Activated B cell treated with CpG ODN at 0.5 μM for 24 hours (primary cell): ENCODE measurements at regions of chr17 and their contacts with region 1.

Region 1: GRCh38 chr17:48054238-48055185 is 6.4 kb downstream of the NFE2L1 start:
- DNase-seq: no peak
- ATAC-seq: no peak
- H3K4me3 Mint-ChIP-seq: peak overlapping the region; percentile 73
- H3K27ac Mint-ChIP-seq: peak overlapping the region; percentile 99
- H3K4me1 Mint-ChIP-seq: peaks cover 75% of the 10 kb centered on the region
- H3K27me3 Mint-ChIP-seq: no peaks in the 10 kb centered on the region
- CTCF ChIP-seq: no peak

Region 2: GRCh38 chr17:47905221-47905781 is 149.2 kb before region 1 on chr17:
- CTCF ChIA-PET with region 1: no interaction called
- POLR2A ChIA-PET with region 1: no interaction called
- intact Hi-C with region 1: no loop called
- DNase-seq: no peak
- ATAC-seq: no peak
- H3K4me3 Mint-ChIP-seq: no peak overlapping the region
- H3K27ac Mint-ChIP-seq: no peak overlapping the region
- H3K4me1 Mint-ChIP-seq: peaks cover 31% of the 10 kb centered on the region
- H3K27me3 Mint-ChIP-seq: no peaks in the 10 kb centered on the region
- CTCF ChIP-seq: no peak

Region 3: GRCh38 chr17:48037036-48037837 is 17.3 kb before region 1 on chr17 and contains the start of gene COPZ2:
- CTCF ChIA-PET with region 1: interaction called, 8 read pairs
- POLR2A ChIA-PET with region 1: interaction called, 27 read pairs
- intact Hi-C with region 1: loop called (anchors 1 kb)
- DNase-seq: peak; percentile 53
- ATAC-seq: peak; percentile 93
- H3K4me3 Mint-ChIP-seq: peak within 1 kb of the TSS; percentile 86
- H3K27ac Mint-ChIP-seq: no peak within 1 kb of the TSS
- H3K4me1 Mint-ChIP-seq: peaks cover 14% of the 10 kb centered on the region
- H3K27me3 Mint-ChIP-seq: peaks cover 17% of the 10 kb centered on the region
- CTCF ChIP-seq: no peak
- total RNA-seq, gene COPZ2: 3.3 and 4.1 TPM in 2 replicates

Region 4: DNA sequence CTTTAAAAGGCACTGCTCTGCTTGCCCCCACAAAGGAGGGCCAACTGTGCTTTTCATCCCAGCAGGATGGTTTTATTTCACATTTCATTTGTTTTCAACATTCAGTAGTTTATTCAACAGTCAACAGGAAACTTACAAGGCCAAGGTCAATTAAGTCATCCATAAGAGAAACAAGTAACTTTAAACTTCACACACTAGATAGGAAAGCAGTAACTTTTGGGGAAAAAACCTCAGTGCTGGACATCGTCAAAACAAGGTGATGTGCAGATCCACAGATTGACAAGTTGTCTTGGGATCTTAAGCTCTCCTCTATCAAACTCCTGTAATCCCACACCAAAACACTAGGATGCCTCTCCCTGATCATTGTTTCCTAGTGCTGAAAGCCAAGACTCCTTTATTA is 12.1 kb after region 1 on chr17:
- CTCF ChIA-PET with region 1: interaction called, 3 read pairs
- POLR2A ChIA-PET with region 1: interaction called, 83 read pairs
- intact Hi-C with region 1: no loop called
- DNase-seq: no peak
- ATAC-seq: no peak
- H3K4me3 Mint-ChIP-seq: no peak overlapping the region
- H3K27ac Mint-ChIP-seq: peak overlapping the region; percentile 13
- H3K4me1 Mint-ChIP-seq: no peaks in the 10 kb centered on the region
- H3K27me3 Mint-ChIP-seq: no peaks in the 10 kb centered on the region
- CTCF ChIP-seq: no peak

Region 5: DNA sequence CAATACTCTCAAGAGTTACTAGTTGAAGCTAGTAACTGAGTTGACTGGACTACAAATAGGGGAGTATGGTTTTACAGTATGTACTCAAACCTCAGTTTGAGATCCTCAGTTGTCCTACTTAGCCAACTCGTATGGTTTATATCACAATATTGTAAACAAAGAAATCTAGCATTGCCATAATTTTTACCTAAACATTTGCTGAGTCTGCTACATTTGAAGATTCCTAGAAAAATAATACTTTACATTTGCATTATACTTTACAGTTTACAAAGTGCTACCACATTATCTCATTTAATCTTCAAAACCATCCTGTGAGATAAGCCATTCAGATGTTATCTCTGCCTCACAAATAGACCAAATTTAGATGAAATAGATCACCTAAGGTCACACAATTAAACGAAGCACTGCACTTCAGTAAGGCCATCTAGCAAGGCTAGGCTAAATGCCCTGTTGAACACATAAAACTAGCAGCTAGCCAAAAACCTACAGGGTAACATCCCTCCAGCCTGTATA is 30.5 kb after region 1 on chr17:
- CTCF ChIA-PET with region 1: interaction called, 12 read pairs
- POLR2A ChIA-PET with region 1: no interaction called
- intact Hi-C with region 1: no loop called
- DNase-seq: no peak
- ATAC-seq: no peak
- H3K4me3 Mint-ChIP-seq: no peak overlapping the region
- H3K27ac Mint-ChIP-seq: no peak overlapping the region
- H3K4me1 Mint-ChIP-seq: peaks cover 5% of the 10 kb centered on the region
- H3K27me3 Mint-ChIP-seq: no peaks in the 10 kb centered on the region
- CTCF ChIP-seq: no peak